GM12878 (cell line): ENCODE measurements at regions of chr17 and their contacts with region 1.

Region 1: GRCh38 chr17:77542551-77543490 is 402.1 kb downstream of the SEC14L1 start:
- DNase-seq: peak; percentile 5
- ATAC-seq: peak; percentile 91
- H3K4me3 ChIP-seq: no peak overlapping the region
- H3K27ac ChIP-seq: no peak overlapping the region
- H3K4me1 ChIP-seq: no peaks in the 10 kb centered on the region
- H3K27me3 ChIP-seq: peaks cover 0 to 1% of the 10 kb centered on the region in 2 experiments; a peak in 2 of 4 replicates
- CTCF ChIP-seq: peak; percentile 84 to 88 (median 86)
- EP300 ChIP-seq: no peak
- POLR2A ChIP-seq: no peak
- RAD21 ChIP-seq: peak; percentile 84

Region 2: DNA sequence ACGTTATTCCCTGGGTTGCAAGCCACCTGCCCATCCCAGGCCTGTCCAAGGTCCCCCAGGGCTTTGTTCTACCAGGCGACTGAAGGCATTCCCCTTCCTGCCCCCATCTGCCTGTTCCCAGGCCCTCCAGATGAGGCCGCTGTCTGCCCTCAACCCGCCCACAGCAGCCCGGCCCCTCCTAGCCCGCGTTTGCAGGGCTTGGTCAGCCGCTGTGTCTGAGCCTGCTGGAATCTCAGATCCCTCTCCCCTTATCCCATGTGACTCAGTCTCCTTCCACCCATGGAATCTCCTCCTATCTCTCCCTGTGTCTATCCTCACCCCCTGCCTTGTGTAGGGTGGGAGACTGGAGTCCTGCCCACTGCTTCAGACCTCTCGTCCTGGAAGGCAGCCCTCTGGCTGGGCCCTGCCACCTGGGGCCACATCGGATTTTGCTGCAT is 229.7 kb after region 1 on chr17:
- CTCF ChIA-PET with region 1: interaction called, 6 read pairs
- POLR2A ChIA-PET with region 1: no interaction called
- RAD21 ChIA-PET with region 1: interaction called, 3 read pairs
- SMC1A ChIA-PET with region 1: no interaction called
- in situ Hi-C with region 1: no loop called
- intact Hi-C with region 1: loop called (anchors 2 kb)
- DNase-seq: no peak
- ATAC-seq: peak; percentile 99
- H3K4me3 ChIP-seq: no peak overlapping the region
- H3K27ac ChIP-seq: no peak overlapping the region
- H3K4me1 ChIP-seq: no peaks in the 10 kb centered on the region
- H3K27me3 ChIP-seq: no peaks in the 10 kb centered on the region
- CTCF ChIP-seq: peak; percentile 79 to 96 (median 92)
- EP300 ChIP-seq: no peak
- POLR2A ChIP-seq: no peak
- RAD21 ChIP-seq: peak; percentile 78